CD4-positive, alpha-beta memory T cell (primary cell): ENCODE measurements at regions of chr1 and their contacts with region 1.

Region 1: GRCh38 chr1:58948671-58949070 is 164.8 kb upstream of the JUN start:
- DNase-seq: no peak
- H3K4me3 ChIP-seq: no peak overlapping the region
- H3K4me3 Mint-ChIP-seq: peak overlapping the region in 1 of 8 donors; percentile 29
- H3K27ac ChIP-seq: no peak overlapping the region
- H3K27ac Mint-ChIP-seq: no peak overlapping the region
- H3K4me1 ChIP-seq: peaks cover 23% of the 10 kb centered on the region
- H3K4me1 Mint-ChIP-seq: peaks cover 29 to 41% (median 34%) of the 10 kb centered on the region in 4 donors
- H3K27me3 ChIP-seq: no peaks in the 10 kb centered on the region
- H3K27me3 Mint-ChIP-seq: peaks cover 0 to 2% of the 10 kb centered on the region in 2 donors

Region 2: DNA sequence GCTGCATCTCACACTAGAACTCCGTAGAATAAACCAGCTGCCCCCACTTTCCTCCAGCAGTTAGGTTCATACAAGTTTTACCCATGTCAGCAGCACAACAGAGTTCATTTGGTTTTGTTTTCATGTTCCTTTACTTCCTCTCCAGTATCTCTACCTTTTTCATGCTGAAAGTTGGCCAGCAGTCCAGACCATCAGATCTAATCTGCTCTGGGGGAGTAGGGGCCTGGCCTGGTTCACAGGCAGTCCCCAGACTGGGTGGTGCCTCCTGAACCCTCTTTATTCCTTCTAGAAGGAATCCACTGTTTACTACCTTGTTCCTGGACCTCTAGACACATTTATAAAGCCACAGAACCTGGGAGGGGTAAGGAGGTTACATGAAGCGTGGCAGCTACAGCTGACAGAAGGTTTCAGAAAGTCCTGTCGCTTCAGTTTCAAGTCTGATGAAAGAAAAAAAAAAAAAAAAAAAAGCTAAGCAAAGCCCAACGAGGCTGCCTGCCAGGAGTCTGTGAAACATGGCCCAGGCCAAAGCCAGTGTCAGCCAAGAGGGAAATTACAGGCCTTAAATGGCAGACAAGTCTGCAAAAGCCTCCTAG is 19.8 kb after region 1 on chr1:
- CTCF ChIA-PET with region 1: no interaction called
- POLR2A ChIA-PET with region 1: no interaction called
- intact Hi-C with region 1: loop called (anchors 1 kb)
- DNase-seq: peak in 4 of 5 donors; percentile 26 to 38 (median 34)
- H3K4me3 ChIP-seq: no peak overlapping the region
- H3K4me3 Mint-ChIP-seq: peak overlapping the region in 6 of 8 donors; percentile 54 to 85 (median 75)
- H3K27ac ChIP-seq: peak overlapping the region; percentile 24
- H3K27ac Mint-ChIP-seq: peak overlapping the region; percentile 76 to 96 (median 94)
- H3K4me1 ChIP-seq: peaks cover 35% of the 10 kb centered on the region
- H3K4me1 Mint-ChIP-seq: peaks cover 24 to 49% (median 31%) of the 10 kb centered on the region in 4 donors
- H3K27me3 ChIP-seq: no peaks in the 10 kb centered on the region
- H3K27me3 Mint-ChIP-seq: no peaks in the 10 kb centered on the region